Prostate gland (tissue), 2 donors: ENCODE measurements at regions of chr5 and their contacts with region 1.

Region 1: DNA sequence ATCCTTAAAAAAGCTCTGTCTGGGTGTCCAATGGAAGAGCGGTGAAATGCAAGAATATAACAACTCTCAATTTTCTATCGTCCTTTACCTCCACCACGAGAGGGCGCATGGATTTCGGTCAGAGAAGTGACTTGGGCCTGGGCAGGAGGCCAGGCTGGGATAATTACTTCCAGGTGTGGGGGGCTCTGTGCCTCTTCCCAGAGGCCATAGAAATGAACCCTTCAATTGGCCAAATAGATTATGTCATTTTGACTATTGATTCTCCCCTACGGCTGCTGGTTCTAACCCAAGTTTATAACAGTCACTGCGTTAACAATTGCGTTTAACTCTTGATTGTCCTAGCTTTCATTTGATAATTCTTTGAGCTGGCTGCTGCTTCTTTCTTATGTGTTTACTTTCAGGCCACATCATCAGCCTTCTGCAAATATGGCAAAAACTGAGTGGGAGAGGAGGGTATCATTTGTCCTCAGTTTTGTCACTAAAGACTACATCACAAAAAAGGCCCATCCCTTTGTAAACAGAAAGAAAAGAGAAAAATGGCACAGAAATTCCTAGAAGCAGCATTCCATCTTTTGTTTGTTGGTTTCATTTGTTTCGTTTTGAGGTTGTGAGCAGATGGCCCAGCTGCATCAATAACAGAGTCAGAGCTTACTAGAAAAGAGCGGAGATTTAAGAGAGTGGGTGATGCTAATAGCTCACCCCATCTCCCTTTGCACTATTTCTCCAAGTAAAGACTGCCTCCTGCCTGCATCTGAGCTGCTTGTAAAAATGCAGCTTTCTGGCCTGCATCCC is 45.4 kb upstream of the ZFR start:
- DNase-seq: peak; percentile 63
- H3K4me3 ChIP-seq: no peak overlapping the region
- H3K27ac ChIP-seq: no peak overlapping the region
- H3K4me1 ChIP-seq: no peaks in the 10 kb centered on the region
- H3K27me3 ChIP-seq: no peaks in the 10 kb centered on the region
- CTCF ChIP-seq: peak; percentile 50 to 78 (median 74)
- POLR2A ChIP-seq: no peak

Region 2: DNA sequence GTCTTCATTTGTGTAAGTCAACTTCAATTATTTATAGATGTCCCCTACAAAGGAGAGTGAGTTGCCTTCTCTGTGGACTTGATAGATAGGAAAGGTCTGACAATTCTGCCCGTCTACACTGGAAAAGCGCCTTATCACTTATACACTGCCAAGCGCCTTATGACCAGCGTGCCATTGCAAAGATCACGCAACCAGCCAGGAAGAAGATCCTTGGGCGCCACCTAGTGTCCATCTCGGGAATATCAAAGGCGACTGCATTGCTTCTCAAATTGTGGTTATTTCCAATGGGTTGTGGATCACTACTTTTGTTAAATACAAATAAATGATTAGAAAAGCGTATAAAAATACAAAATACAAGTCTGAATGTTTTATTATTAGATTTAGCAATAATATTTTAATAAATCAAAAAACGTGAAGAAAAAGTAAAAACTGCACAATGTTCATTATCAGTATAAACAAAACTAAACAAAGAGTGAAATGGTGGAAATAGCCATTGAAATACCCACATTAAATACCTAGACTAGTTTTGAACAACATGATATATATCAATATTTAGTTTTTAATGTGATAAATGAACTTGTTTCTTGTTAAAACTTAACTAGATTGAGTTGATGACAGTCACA is 123.2 kb after region 1 on chr5:
- intact Hi-C with region 1: loop called (anchors 2 kb)
- DNase-seq: peak; percentile 67
- H3K4me3 ChIP-seq: no peak overlapping the region
- H3K27ac ChIP-seq: no peak overlapping the region
- H3K4me1 ChIP-seq: no peaks in the 10 kb centered on the region
- H3K27me3 ChIP-seq: no peaks in the 10 kb centered on the region
- CTCF ChIP-seq: peak; percentile 62 to 88 (median 80)
- POLR2A ChIP-seq: no peak